ENCODE measurements at regions of chr1 and their contacts with region 1.

Region 1: GRCh38 chr1:19661721-19662228 is 2.9 kb upstream of the HTR6 start:
- DNase-seq: peak; percentile 51
- H3K4me3 ChIP-seq: no peak overlapping the region
- H3K27ac ChIP-seq: no peak overlapping the region
- H3K4me1 ChIP-seq: no peaks in the 10 kb centered on the region
- CTCF ChIP-seq: peak; percentile 95

Region 2: GRCh38 chr1:19640363-19641316 is 21.1 kb before region 1 on chr1:
- CTCF ChIA-PET with region 1: no interaction called
- POLR2A ChIA-PET with region 1: no interaction called
- intact Hi-C with region 1: no loop called
- DNase-seq: no peak
- H3K4me3 ChIP-seq: no peak overlapping the region
- H3K27ac ChIP-seq: no peak overlapping the region
- H3K4me1 ChIP-seq: no peaks in the 10 kb centered on the region
- CTCF ChIP-seq: no peak

Region 3: GRCh38 chr1:19704247-19705113 is 42.7 kb after region 1 on chr1:
- CTCF ChIA-PET with region 1: interaction called, 3 read pairs
- POLR2A ChIA-PET with region 1: no interaction called
- intact Hi-C with region 1: loop called (anchors 1 kb)
- DNase-seq: peak; percentile 57
- H3K4me3 ChIP-seq: no peak overlapping the region
- H3K27ac ChIP-seq: no peak overlapping the region
- H3K4me1 ChIP-seq: no peaks in the 10 kb centered on the region
- CTCF ChIP-seq: peak; percentile 88